ENCODE measurements at regions of chr3 and their contacts with region 1.

Region 1: GRCh38 chr3:150408221-150409102 is at the start of gene TSC22D2:
- DNase-seq: peak; percentile 92
- H3K4me3 Mint-ChIP-seq: peak within 1 kb of the TSS; percentile 83
- H3K27ac Mint-ChIP-seq: peak within 1 kb of the TSS; percentile 95
- H3K4me1 Mint-ChIP-seq: peaks cover 40% of the 10 kb centered on the region
- H3K27me3 Mint-ChIP-seq: peaks cover 6% of the 10 kb centered on the region
- total RNA-seq, gene TSC22D2: 21.3 and 22.7 TPM in 2 replicates

Region 2: DNA sequence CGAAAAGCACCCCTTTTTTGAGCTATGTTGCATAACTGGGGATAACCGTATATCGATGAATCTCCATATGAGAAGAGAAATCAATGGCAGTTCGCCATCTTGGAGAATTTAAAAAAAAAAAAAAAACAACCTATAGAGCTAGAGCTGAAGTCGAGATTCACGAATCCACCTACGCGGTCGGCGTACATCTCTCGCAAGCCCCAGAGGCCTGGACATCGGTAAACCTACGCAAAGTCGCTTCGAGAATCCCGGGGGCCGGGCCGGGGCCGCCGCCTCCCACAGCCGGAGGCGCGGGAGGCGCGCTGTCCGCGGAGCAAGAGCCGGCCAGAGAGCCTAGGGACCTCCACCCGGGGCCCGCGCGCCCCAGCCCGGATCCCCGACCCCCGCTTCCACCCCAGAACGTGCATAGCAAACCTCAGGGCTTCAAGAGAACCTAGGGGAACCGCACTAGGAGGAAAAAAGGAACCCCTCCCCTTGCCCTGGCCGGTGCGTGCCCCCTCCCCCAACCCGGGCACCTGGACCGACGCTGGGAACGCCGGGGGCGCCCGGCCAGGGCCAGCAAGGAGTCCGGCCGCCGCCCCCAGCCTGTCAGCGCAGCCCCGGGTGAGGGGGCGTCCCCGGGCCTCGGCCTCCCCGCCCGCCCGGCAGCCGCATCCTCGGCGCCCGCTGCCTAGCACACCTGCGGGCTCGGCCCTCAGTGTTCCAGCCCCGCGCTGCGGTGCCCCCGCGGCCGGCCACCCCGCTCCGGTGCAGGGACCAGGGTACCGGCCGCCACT is 438.3 kb before region 1 on chr3:
- intact Hi-C with region 1: loop called (anchors 2 kb)
- DNase-seq: peak; percentile 56
- H3K4me3 Mint-ChIP-seq: peak overlapping the region; percentile 80
- H3K27ac Mint-ChIP-seq: no peak overlapping the region
- H3K4me1 Mint-ChIP-seq: peaks cover 12% of the 10 kb centered on the region
- H3K27me3 Mint-ChIP-seq: peaks cover 54% of the 10 kb centered on the region

Region 3: DNA sequence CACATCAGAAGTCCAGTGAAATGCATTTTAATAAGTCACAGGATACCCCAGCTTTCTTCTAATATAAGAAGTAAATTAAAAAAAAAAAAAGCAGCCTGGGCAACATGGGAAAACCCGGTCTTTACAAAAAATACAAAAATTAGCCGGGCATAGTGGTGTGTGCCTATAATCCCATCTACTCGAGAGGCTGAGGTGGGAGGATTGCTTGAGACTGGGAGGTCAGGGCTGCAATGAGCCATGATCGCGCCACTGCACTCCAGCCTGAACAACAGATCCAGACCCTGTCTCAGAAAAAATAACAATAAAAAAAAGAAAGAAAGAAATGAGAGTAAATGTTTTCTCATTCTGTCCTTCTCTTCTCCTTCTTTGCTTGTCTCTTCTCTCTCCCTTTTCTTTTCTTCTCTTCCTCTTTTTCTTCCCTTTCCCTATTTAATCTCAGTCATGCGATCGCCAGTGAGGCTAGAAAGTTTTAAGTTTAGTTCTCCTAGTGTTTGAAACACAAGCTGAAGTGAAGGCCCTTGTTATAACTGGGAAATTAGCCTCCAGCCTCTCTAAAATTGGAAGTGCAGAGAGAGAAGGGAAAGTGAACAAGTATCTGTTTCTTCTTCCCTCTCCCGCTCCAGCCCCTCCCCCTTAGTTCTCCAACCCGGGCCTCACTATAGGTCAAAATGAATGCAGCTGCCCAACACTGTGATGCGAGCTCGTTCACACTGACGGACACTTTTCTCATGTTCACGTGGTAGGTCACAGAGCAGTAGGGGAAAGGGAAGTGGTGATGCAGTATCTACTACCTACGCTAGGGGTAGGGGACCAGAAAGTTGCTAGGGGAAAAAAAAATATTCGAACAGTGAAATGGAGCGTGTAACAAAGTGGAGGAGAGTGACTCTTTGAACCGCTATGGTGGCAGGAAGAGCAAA is 23.9 kb before region 1 on chr3:
- intact Hi-C with region 1: loop called (anchors 1 kb)
- DNase-seq: peak; percentile 36
- H3K4me3 Mint-ChIP-seq: peak overlapping the region; percentile 37
- H3K27ac Mint-ChIP-seq: peak overlapping the region; percentile 80
- H3K4me1 Mint-ChIP-seq: peaks cover 32% of the 10 kb centered on the region
- H3K27me3 Mint-ChIP-seq: no peaks in the 10 kb centered on the region

Region 4: GRCh38 chr3:150603153-150603979 is 194.9 kb after region 1 on chr3 and contains the start of gene SELENOT:
- intact Hi-C with region 1: loop called (anchors 1 kb)
- DNase-seq: peak; percentile 96
- H3K4me3 Mint-ChIP-seq: peak within 1 kb of the TSS; percentile 99
- H3K27ac Mint-ChIP-seq: peak within 1 kb of the TSS; percentile 99
- H3K4me1 Mint-ChIP-seq: peaks cover 80% of the 10 kb centered on the region
- H3K27me3 Mint-ChIP-seq: peaks cover 2% of the 10 kb centered on the region
- total RNA-seq, gene SELENOT: 139 and 140 TPM in 2 replicates

Region 5: GRCh38 chr3:150870396-150870795 is 461.9 kb after region 1 on chr3:
- intact Hi-C with region 1: loop called (anchors 10 kb)
- DNase-seq: no peak
- H3K4me3 Mint-ChIP-seq: no peak overlapping the region
- H3K27ac Mint-ChIP-seq: no peak overlapping the region
- H3K4me1 Mint-ChIP-seq: peaks cover 2% of the 10 kb centered on the region
- H3K27me3 Mint-ChIP-seq: peaks cover 12% of the 10 kb centered on the region

Region 6: DNA sequence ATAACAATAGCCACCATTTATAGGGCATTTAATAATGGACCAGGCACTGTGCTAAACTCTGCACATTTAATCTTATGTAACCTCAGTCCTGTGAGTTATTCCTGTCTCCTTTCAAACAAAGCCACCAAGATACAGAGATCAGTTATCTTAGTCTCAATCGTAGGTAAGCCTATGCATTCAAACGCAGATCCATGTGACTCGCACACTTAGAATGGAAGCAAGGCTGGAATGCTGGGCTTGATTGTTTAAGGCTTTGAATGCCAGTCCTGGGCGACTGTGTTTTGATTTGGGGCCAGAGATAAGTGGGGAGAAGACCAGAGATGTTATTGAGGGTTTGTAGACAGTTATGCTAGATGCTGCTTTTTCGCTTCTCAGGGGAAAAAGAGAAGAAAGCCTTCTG is 699.2 kb after region 1 on chr3:
- intact Hi-C with region 1: no loop called
- DNase-seq: no peak
- H3K4me3 Mint-ChIP-seq: no peak overlapping the region
- H3K27ac Mint-ChIP-seq: no peak overlapping the region
- H3K4me1 Mint-ChIP-seq: no peaks in the 10 kb centered on the region
- H3K27me3 Mint-ChIP-seq: peaks cover 6% of the 10 kb centered on the region

Measured in activated T-helper 1 cell treated with anti-CD3 and anti-CD28 coated beads, Interleukin-12 subunit alpha, Interleukin-12 subunit beta, Interleukin-2, Interleukin-4 antibody, amounts not matched to agents 30 ng/mL and 10 ng/mL and 1 ng/mL, durations not matched to agents 14 hours and 24 hours and 36 hours (primary cell).